ENCODE measurements at regions of chr3 and their contacts with region 1.

Region 1: GRCh38 chr3:57007513-57008460 is 52.7 kb upstream of the SPATA12 start:
- DNase-seq: peak; percentile 56
- H3K4me3 ChIP-seq: no peak overlapping the region
- H3K27ac ChIP-seq: peak overlapping the region; percentile 74 to 88 (median 83)
- H3K4me1 ChIP-seq: peaks cover 3 to 37% (median 28%) of the 10 kb centered on the region in 4 donors
- H3K27me3 ChIP-seq: no peaks in the 10 kb centered on the region
- CTCF ChIP-seq: no peak
- EP300 ChIP-seq: peak; percentile 76
- POLR2A ChIP-seq: no peak

Region 2: DNA sequence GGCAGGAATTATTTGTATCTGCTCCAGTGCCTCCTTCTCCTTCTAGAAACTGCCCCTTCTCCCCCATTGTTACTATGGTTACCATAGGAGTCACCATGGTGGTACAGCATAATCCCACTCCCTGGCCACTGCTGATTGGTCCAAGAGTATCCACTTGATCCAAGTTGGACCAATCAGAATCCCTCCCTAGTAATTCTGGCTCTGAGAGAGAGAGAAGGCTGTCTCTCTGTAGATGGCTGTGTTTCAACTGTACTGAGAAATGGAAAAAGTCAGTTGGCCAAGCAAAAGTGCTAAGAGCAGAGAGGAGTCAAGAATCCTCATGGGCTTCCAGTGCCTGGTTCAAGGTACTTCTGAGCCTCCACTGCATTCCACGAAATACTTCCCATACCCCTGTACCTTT is 68.0 kb before region 1 on chr3:
- in situ Hi-C with region 1: no loop called
- intact Hi-C with region 1: no loop called
- DNase-seq: no peak
- H3K4me3 ChIP-seq: no peak overlapping the region
- H3K27ac ChIP-seq: no peak overlapping the region
- H3K4me1 ChIP-seq: no peaks in the 10 kb centered on the region
- H3K27me3 ChIP-seq: no peaks in the 10 kb centered on the region
- CTCF ChIP-seq: no peak
- EP300 ChIP-seq: no peak
- POLR2A ChIP-seq: no peak

Region 3: DNA sequence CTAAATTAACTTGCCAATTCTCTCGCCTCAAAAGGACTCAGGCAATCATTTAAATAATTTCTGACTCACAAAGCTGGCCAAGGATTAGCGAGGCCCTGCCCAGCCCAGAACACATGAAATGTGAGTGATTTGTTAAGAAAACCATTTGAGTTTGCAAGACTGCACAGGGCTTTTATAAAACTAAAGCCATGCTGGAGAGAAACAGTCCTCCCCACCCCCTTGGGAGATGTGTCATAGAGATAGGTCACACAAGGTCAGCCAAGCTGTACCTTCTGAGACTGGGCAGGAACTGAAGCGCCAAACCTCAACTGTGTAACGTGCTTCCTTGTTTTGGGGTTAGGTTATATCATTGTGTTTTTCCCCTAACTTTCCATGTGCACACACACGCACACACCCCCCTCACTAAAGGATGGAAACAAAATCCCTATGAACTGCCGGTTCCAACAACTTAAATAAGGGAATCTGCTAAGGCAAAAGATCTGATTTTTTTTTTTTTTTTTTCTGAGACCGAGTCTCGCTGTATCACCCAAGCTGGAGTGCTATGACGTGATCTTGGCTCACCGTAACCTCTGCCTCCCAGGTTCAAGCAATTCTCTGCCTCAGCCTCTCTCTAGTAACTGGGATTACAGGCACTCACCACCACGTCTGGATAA is 60.8 kb after region 1 on chr3:
- in situ Hi-C with region 1: no loop called
- intact Hi-C with region 1: loop called (anchors 5 kb)
- DNase-seq: peak; percentile 28
- H3K4me3 ChIP-seq: no peak overlapping the region
- H3K27ac ChIP-seq: peak overlapping the region; percentile 44 to 73 (median 60)
- H3K4me1 ChIP-seq: peaks cover 0 to 21% (median 8%) of the 10 kb centered on the region in 4 donors
- H3K27me3 ChIP-seq: no peaks in the 10 kb centered on the region
- CTCF ChIP-seq: no peak
- EP300 ChIP-seq: no peak
- POLR2A ChIP-seq: no peak

Region 4: GRCh38 chr3:57268416-57268815 is 260.6 kb after region 1 on chr3:
- in situ Hi-C with region 1: no loop called
- intact Hi-C with region 1: no loop called
- DNase-seq: no peak
- H3K4me3 ChIP-seq: no peak overlapping the region
- H3K27ac ChIP-seq: no peak overlapping the region
- H3K4me1 ChIP-seq: no peaks in the 10 kb centered on the region
- H3K27me3 ChIP-seq: no peaks in the 10 kb centered on the region
- CTCF ChIP-seq: no peak
- EP300 ChIP-seq: no peak
- POLR2A ChIP-seq: no peak

Measured in transverse colon (tissue), 4 donors.